GM12878 (cell line): ENCODE measurements at regions of chr2 and their contacts with region 1.

Region 1: GRCh38 chr2:171319164-171319810 is 114.5 kb downstream of the METTL8 start:
- DNase-seq: peak; percentile 98
- ATAC-seq: peak; percentile 66
- H3K4me3 ChIP-seq: peak overlapping the region; percentile 50; the same call in 1 of the 2 replicates
- H3K27ac ChIP-seq: peak overlapping the region; percentile 100
- H3K4me1 ChIP-seq: peaks cover 78% of the 10 kb centered on the region
- H3K27me3 ChIP-seq: no peaks in the 10 kb centered on the region
- CTCF ChIP-seq: no peak
- EP300 ChIP-seq: peak; percentile 97 to 98
- POLR2A ChIP-seq: peak; percentile 42; the same call in 1 of the 2 replicates
- RAD21 ChIP-seq: peak; percentile 40; the same call in 1 of the 2 replicates

Region 2: GRCh38 chr2:170973492-170974303 is 345.6 kb before region 1 on chr2:
- CTCF ChIA-PET with region 1: interaction called, 5 read pairs
- POLR2A ChIA-PET with region 1: interaction called, 6 read pairs
- RAD21 ChIA-PET with region 1: no interaction called
- SMC1A ChIA-PET with region 1: interaction called, 4 read pairs
- in situ Hi-C with region 1: no loop called
- intact Hi-C with region 1: loop called (anchors 5 kb)
- DNase-seq: peak; percentile 64
- ATAC-seq: peak; percentile 97
- H3K4me3 ChIP-seq: peak overlapping the region; percentile 78
- H3K27ac ChIP-seq: peak overlapping the region; percentile 72
- H3K4me1 ChIP-seq: peaks cover 10% of the 10 kb centered on the region
- H3K27me3 ChIP-seq: no peaks in the 10 kb centered on the region
- CTCF ChIP-seq: peak; percentile 88 to 96 (median 89)
- EP300 ChIP-seq: peak in 1 of 2 experiments; percentile 40; a peak in 1 of 4 replicates
- POLR2A ChIP-seq: peak; percentile 74
- RAD21 ChIP-seq: peak; percentile 90

Region 3: DNA sequence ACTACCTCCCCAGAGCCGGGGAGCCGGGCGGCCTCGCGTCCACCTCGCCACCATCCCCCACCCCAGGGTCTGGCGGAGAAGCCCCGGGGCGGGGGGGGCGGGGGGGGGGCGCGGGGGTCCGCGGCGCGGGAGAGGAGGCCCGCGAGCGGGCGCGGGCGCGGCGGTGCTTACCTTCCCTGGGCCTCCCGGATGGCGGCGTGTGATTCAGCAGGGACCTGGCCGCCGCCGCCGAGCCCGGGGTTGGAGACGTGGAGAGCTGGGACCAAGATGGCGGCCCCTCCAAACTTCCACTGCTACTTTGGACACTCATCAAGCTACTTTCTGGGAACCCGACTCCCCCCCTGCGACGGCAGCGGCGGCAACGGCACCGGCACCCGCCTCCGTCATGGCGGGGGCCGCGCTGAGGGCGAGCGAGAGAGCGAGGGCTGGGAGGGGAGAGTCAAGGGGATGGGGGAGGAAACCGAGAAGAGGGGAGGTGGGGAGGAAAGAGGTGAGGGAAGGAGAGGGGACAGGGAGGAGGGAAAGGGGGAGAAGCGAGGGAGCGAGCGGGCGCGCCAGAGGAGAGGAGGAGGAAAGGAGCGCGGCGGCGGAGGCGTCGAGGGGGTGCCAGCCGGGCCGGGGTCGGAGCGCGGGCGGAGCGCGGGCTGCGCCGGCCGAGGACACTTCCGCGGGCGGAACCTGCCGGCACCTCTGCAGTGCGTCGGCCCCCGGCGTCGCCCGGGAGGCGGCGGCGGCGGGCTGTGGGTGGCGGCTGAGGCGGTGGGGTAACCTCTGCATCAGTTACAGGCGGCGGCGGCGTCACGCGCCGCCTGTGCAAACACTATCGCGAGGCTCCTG is 158.9 kb before region 1 on chr2 and contains the start of gene TLK1:
- CTCF ChIA-PET with region 1: interaction called, 92 read pairs
- POLR2A ChIA-PET with region 1: interaction called, 143 read pairs
- RAD21 ChIA-PET with region 1: interaction called, 102 read pairs
- SMC1A ChIA-PET with region 1: interaction called, 236 read pairs
- in situ Hi-C with region 1: loop called (anchors 5 kb)
- intact Hi-C with region 1: loop called (anchors 1 kb)
- DNase-seq: no peak
- ATAC-seq: peak; percentile 64
- H3K4me3 ChIP-seq: peak within 1 kb of the TSS; percentile 91
- H3K27ac ChIP-seq: peak within 1 kb of the TSS; percentile 96
- H3K4me1 ChIP-seq: peaks cover 20% of the 10 kb centered on the region
- H3K27me3 ChIP-seq: no peaks in the 10 kb centered on the region
- CTCF ChIP-seq: peak in 1 of 3 experiments; percentile 14; a peak in 1 of 6 replicates
- EP300 ChIP-seq: no peak
- POLR2A ChIP-seq: peak; percentile 79
- RAD21 ChIP-seq: peak; percentile 39; the same call in 1 of the 2 replicates
- polyA plus RNA-seq, gene TLK1: 42.5 to 126 TPM

Region 4: GRCh38 chr2:171271971-171272436 is 47.3 kb before region 1 on chr2:
- CTCF ChIA-PET with region 1: interaction called, 4 read pairs
- POLR2A ChIA-PET with region 1: interaction called, 4 read pairs
- RAD21 ChIA-PET with region 1: interaction called, 4 read pairs
- SMC1A ChIA-PET with region 1: interaction called, 8 read pairs
- in situ Hi-C with region 1: no loop called
- intact Hi-C with region 1: loop called (anchors 1 kb)
- DNase-seq: no peak
- ATAC-seq: no peak
- H3K4me3 ChIP-seq: no peak overlapping the region
- H3K27ac ChIP-seq: no peak overlapping the region
- H3K4me1 ChIP-seq: no peaks in the 10 kb centered on the region
- H3K27me3 ChIP-seq: no peaks in the 10 kb centered on the region
- CTCF ChIP-seq: no peak
- EP300 ChIP-seq: no peak
- POLR2A ChIP-seq: no peak
- RAD21 ChIP-seq: no peak

Region 5: GRCh38 chr2:171342067-171342413 is 22.8 kb after region 1 on chr2:
- CTCF ChIA-PET with region 1: interaction called, 35 read pairs
- POLR2A ChIA-PET with region 1: interaction called, 116 read pairs
- RAD21 ChIA-PET with region 1: interaction called, 215 read pairs
- SMC1A ChIA-PET with region 1: interaction called, 96 read pairs
- in situ Hi-C with region 1: no loop called
- intact Hi-C with region 1: no loop called
- DNase-seq: no peak
- ATAC-seq: peak; percentile 10; the same call in 2 of the 3 replicates
- H3K4me3 ChIP-seq: no peak overlapping the region
- H3K27ac ChIP-seq: peak overlapping the region; percentile 69
- H3K4me1 ChIP-seq: peaks cover 23% of the 10 kb centered on the region
- H3K27me3 ChIP-seq: no peaks in the 10 kb centered on the region
- CTCF ChIP-seq: no peak
- EP300 ChIP-seq: no peak
- POLR2A ChIP-seq: no peak
- RAD21 ChIP-seq: no peak

Region 6: GRCh38 chr2:171407030-171407675 is 87.9 kb after region 1 on chr2:
- CTCF ChIA-PET with region 1: interaction called, 29 read pairs
- POLR2A ChIA-PET with region 1: interaction called, 168 read pairs
- RAD21 ChIA-PET with region 1: interaction called, 208 read pairs
- SMC1A ChIA-PET with region 1: interaction called, 273 read pairs
- in situ Hi-C with region 1: no loop called
- intact Hi-C with region 1: loop called (anchors 2 kb)
- DNase-seq: peak; percentile 71
- ATAC-seq: peak; percentile 75
- H3K4me3 ChIP-seq: 0 out of 2 replicates have a peak overlapping the region, but pooled peaks have one; percentile 14
- H3K27ac ChIP-seq: peak overlapping the region; percentile 93
- H3K4me1 ChIP-seq: peaks cover 64% of the 10 kb centered on the region
- H3K27me3 ChIP-seq: no peaks in the 10 kb centered on the region
- CTCF ChIP-seq: no peak
- EP300 ChIP-seq: peak; percentile 54 to 94; a peak in 3 of 4 replicates
- POLR2A ChIP-seq: no peak
- RAD21 ChIP-seq: 0 out of 2 replicates have a peak, but pooled peaks have one; percentile 14

Region 7: DNA sequence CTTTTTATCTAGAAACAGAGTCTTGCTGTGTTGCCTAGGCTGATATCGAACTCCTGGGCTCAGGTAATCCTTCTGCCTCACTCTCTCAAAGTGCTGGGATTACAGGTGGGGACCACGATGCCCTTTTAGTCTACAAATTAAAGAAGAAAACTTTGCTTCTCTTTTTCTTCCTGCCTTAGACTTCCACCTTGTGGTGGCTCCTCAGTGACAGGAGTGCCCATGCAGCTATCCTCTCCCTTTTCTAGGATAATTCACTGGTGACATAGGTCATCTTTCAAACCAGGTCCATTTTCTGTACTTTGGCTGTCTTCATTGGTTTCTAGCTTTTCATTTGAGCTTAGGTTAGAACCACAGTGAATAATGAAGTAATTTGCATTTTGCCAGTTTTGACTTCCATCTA is 128.4 kb after region 1 on chr2:
- CTCF ChIA-PET with region 1: no interaction called
- POLR2A ChIA-PET with region 1: no interaction called
- RAD21 ChIA-PET with region 1: no interaction called
- SMC1A ChIA-PET with region 1: no interaction called
- in situ Hi-C with region 1: no loop called
- intact Hi-C with region 1: no loop called
- DNase-seq: no peak
- ATAC-seq: peak; percentile 41; the same call in 2 of the 3 replicates
- H3K4me3 ChIP-seq: no peak overlapping the region
- H3K27ac ChIP-seq: no peak overlapping the region
- H3K4me1 ChIP-seq: no peaks in the 10 kb centered on the region
- H3K27me3 ChIP-seq: no peaks in the 10 kb centered on the region
- CTCF ChIP-seq: peak; percentile 16 to 39 (median 22); a peak in 3 of 6 replicates
- EP300 ChIP-seq: no peak
- POLR2A ChIP-seq: no peak
- RAD21 ChIP-seq: peak; percentile 55

Region 8: GRCh38 chr2:171522052-171522787 is 202.9 kb after region 1 on chr2 and contains the start of gene CYBRD1:
- CTCF ChIA-PET with region 1: no interaction called
- POLR2A ChIA-PET with region 1: no interaction called
- RAD21 ChIA-PET with region 1: interaction called, 3 read pairs
- SMC1A ChIA-PET with region 1: no interaction called
- in situ Hi-C with region 1: no loop called
- intact Hi-C with region 1: loop called (anchors 10 kb)
- DNase-seq: no peak
- ATAC-seq: peak; percentile 79
- H3K4me3 ChIP-seq: peak within 1 kb of the TSS; percentile 95
- H3K27ac ChIP-seq: peak within 1 kb of the TSS; percentile 81
- H3K4me1 ChIP-seq: peaks cover 6% of the 10 kb centered on the region; the same call in 1 of the 2 replicates
- H3K27me3 ChIP-seq: no peaks in the 10 kb centered on the region
- CTCF ChIP-seq: 0 out of 6 replicates have a peak, but pooled peaks of 1 of the 3 experiments have one; percentile 4
- EP300 ChIP-seq: no peak
- POLR2A ChIP-seq: peak; percentile 90
- RAD21 ChIP-seq: no peak
- polyA plus RNA-seq, gene CYBRD1: 10.8 to 13.2 TPM